Activated naive CD4-positive, alpha-beta T cell treated with anti-CD3 and anti-CD28 coated beads for 36 hours (primary cell): ENCODE measurements at regions of chr5 and their contacts with region 1.

Region 1: GRCh38 chr5:135332519-135333150 is 66.4 kb downstream of the MACROH2A1 start:
- DNase-seq: no peak
- H3K4me3 Mint-ChIP-seq: no peak overlapping the region
- H3K27ac Mint-ChIP-seq: no peak overlapping the region
- H3K4me1 Mint-ChIP-seq: no peaks in the 10 kb centered on the region
- H3K27me3 Mint-ChIP-seq: no peaks in the 10 kb centered on the region

Region 2: DNA sequence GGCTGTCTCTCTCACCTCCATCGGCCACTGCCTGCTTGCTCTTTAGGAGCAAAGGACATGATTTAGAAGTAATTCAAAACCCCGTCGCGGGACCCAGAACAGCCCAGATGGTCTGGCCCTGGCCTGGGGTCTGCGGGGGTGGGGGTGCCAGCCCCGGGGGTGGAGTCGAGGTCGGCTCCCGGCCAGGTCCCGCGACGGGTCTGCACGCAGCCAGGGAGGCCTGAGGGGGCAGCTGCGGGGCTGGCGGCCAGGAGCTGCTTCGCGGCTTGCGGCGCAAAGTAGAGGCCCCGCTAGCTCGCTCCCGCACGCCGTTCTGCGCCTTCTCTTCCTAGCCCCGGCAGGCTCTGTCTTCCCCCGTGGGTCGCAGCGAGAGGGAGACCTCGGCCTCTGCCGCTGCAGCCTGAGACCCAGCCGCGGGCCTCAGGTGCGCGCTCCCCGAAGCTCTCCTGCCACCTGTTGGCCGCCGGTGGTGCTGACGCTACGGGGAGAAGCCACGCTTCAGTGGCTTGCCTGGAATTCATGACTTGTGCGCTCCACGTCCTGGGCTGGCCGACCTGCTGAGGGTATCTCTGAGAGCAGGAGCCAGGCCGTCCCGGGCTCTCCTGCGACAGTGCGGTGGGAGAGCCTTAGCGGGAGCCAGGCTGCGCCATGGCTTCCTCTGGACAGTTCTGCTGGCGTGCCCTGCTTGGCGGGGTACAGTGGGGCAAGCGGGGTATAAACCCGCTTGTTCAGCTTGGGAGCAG is 141.4 kb before region 1 on chr5:
- CTCF ChIA-PET with region 1: no interaction called
- intact Hi-C with region 1: loop called (anchors 1 kb)
- DNase-seq: peak; percentile 84
- H3K4me3 Mint-ChIP-seq: peak overlapping the region; percentile 70
- H3K27ac Mint-ChIP-seq: no peak overlapping the region
- H3K4me1 Mint-ChIP-seq: peaks cover 2% of the 10 kb centered on the region
- H3K27me3 Mint-ChIP-seq: peaks cover 5% of the 10 kb centered on the region

Region 3: DNA sequence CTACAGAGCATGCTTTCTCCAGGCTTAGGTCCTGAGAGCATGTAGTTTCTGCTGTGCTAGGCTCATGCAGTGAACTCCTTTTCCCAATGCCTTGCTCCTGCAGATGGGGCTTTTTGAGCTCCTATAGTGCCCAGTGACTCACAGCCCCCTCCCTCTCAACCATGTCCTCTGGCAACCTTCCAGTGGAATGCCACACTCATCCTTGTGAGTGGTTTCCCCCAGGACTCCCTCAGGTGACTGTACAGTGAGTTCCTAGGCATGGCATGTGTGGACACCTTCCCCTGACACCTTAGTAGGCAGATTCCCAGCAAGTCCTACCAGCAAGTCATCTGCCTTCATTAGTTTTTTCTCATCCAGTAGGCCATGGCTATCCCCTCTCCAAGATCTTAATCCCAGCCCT is 318.5 kb after region 1 on chr5:
- CTCF ChIA-PET with region 1: no interaction called
- intact Hi-C with region 1: no loop called
- DNase-seq: no peak
- H3K4me3 Mint-ChIP-seq: no peak overlapping the region
- H3K27ac Mint-ChIP-seq: no peak overlapping the region
- H3K4me1 Mint-ChIP-seq: no peaks in the 10 kb centered on the region
- H3K27me3 Mint-ChIP-seq: no peaks in the 10 kb centered on the region